Activated B cell treated with CpG ODN at 0.5 μM for 24 hours (primary cell): ENCODE measurements at regions of chr13 and their contacts with region 1.

Region 1: DNA sequence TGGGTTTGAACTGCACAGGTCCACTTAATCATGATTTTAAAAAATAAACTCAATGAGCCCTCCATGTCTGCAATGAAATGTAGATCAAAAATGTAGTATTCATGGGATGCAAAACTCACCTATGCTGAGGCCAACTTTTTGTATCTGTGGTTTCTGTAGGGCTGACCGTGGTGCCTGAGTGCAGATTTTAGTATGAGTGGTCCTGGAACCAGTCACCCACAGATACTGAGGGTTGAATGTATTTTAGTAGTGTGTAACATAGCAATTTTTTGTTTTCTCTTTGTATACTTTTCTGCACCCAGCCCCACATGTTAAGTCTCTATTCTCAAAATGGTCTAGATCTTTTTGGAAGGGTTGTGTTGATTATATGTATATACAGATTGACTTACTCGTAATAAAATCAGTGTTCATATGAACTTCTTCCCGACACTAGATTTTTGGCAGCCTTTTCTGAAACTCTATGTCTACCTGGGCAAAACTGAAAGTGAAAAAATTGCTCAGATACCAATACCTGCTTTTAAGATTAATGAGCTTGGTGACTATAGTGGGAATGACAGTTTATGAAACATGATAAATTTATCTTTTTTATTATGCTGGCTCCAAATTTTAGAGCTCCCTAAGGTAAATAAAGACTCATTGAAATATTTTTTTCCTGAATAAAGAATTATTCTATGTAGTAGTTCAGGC is 51.6 kb downstream of the DNAJC15 start:
- DNase-seq: no peak
- ATAC-seq: peak; percentile 21
- H3K4me3 Mint-ChIP-seq: peak overlapping the region; percentile 0
- H3K27ac Mint-ChIP-seq: no peak overlapping the region
- H3K4me1 Mint-ChIP-seq: peaks cover 42% of the 10 kb centered on the region
- H3K27me3 Mint-ChIP-seq: no peaks in the 10 kb centered on the region
- CTCF ChIP-seq: no peak

Region 2: GRCh38 chr13:43030548-43030947 is 44.4 kb before region 1 on chr13:
- CTCF ChIA-PET with region 1: no interaction called
- POLR2A ChIA-PET with region 1: interaction called, 5 read pairs
- intact Hi-C with region 1: loop called (anchors 2 kb)
- DNase-seq: no peak
- ATAC-seq: peak; percentile 96
- H3K4me3 Mint-ChIP-seq: peak overlapping the region; percentile 19
- H3K27ac Mint-ChIP-seq: peak overlapping the region; percentile 25
- H3K4me1 Mint-ChIP-seq: peaks cover 65% of the 10 kb centered on the region
- H3K27me3 Mint-ChIP-seq: no peaks in the 10 kb centered on the region
- CTCF ChIP-seq: no peak

Region 3: GRCh38 chr13:43054803-43055802 is 19.9 kb before region 1 on chr13:
- CTCF ChIA-PET with region 1: no interaction called
- POLR2A ChIA-PET with region 1: no interaction called
- intact Hi-C with region 1: loop called (anchors 2 kb)
- DNase-seq: no peak
- ATAC-seq: peak; percentile 53
- H3K4me3 Mint-ChIP-seq: no peak overlapping the region
- H3K27ac Mint-ChIP-seq: no peak overlapping the region
- H3K4me1 Mint-ChIP-seq: peaks cover 47% of the 10 kb centered on the region
- H3K27me3 Mint-ChIP-seq: no peaks in the 10 kb centered on the region
- CTCF ChIP-seq: no peak